ENCODE measurements at regions of chr1 and their contacts with region 1.

Region 1: DNA sequence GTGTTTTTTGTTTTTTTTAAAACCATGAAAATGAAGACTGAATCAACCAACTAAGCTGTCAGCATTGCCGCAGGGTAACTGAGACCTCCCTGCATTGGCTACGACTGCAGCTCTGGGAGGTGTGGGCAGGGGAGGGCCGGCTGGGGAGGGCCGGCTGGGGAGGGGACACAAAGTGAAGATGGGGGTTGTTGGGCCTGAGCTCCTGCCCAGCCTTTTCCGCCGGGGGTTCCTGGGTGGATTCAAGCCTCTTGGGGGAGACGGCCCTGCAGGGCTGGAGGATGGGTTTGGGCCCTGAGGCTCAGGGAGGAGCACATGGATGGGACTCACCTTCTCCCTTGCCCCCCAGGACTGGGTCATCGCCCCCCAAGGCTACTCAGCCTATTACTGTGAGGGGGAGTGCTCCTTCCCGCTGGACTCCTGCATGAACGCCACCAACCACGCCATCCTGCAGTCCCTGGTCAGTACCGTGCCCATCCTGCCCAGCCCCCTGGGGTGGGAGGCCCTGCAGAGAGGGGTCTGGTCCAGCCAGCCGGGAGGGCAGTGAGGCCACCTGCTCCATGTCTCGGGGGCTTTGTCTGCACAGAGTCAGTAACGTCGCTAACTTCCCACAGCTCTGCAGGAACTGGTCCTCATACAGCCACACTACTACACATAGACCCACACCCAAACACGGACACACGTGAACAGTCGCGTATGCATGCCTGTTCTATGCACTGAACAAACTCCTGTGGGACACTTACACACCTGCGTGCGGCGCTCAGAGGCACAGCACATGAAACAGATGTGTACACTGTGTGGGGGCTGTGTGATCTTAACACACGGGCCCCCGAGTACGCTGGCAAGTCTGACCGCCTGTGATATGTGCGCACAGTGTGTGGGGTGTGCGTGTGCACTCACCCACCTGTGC is 31.5 kb downstream of the BMP8A start:
- DNase-seq: no peak
- H3K4me3 ChIP-seq: no peak overlapping the region
- H3K27ac ChIP-seq: no peak overlapping the region
- H3K4me1 ChIP-seq: no peaks in the 10 kb centered on the region
- H3K27me3 ChIP-seq: no peaks in the 10 kb centered on the region
- CTCF ChIP-seq: no peak

Region 2: DNA sequence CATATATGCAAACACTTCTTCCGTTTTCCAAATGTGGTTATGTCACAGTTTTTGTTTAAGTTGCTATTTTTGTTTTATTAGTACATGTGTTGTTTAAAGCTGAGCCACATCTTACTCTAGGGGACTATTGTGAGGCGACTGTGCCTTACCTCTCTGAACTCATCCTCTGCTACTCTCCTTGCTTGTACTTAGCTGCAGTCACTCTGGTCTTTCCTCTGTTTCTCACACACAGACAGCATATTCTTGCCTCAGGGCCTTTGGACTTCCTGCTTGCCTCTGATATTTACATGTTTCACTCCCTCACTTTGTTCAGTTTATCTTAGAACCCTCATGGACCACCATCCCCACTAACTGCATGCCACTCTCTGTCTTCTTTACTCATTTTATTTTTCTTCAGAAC is 217.4 kb before region 1 on chr1:
- CTCF ChIA-PET with region 1: no interaction called
- POLR2A ChIA-PET with region 1: no interaction called
- intact Hi-C with region 1: no loop called
- DNase-seq: no peak
- H3K4me3 ChIP-seq: no peak overlapping the region
- H3K27ac ChIP-seq: no peak overlapping the region
- H3K4me1 ChIP-seq: no peaks in the 10 kb centered on the region
- H3K27me3 ChIP-seq: no peaks in the 10 kb centered on the region
- CTCF ChIP-seq: no peak

Region 3: DNA sequence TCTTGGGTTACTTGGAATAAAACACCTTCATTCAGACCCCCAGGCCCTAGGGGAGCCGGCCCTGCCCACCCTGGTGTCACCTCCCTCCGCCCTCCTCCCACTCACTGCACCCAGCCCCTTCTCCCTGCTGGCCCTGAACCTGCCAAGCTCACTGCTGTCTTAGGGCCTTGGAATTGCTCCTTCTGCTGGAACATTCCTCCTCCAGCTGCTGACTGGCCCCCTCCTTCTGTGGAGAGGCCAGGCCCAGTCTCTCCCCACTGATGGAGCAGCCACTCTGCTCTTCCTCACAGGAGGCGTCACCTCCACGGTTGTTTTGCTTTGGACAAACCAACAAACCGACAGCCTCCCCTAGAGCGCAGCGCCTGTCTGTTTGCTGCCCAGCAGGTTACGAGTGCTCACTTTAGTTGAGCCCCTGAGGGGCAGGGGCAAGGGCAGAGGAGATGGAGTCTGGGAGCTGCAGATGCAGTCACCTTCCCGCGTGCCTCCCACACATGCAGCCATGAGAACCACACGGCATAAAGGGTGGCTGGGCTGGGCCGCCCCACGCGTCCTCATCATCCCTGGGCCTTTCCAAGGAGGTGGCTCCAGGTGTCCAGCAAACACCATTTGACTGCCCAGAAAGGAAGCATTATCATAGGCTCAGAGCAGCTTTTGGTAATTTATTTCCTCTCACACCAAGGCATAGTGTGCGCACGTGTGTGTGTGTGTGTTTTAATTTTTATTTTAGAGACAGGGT is 238.8 kb after region 1 on chr1:
- CTCF ChIA-PET with region 1: no interaction called
- POLR2A ChIA-PET with region 1: no interaction called
- intact Hi-C with region 1: loop called (anchors 5 kb)
- DNase-seq: no peak
- H3K4me3 ChIP-seq: no peak overlapping the region
- H3K27ac ChIP-seq: no peak overlapping the region
- H3K4me1 ChIP-seq: no peaks in the 10 kb centered on the region
- H3K27me3 ChIP-seq: no peaks in the 10 kb centered on the region
- CTCF ChIP-seq: no peak

Region 4: DNA sequence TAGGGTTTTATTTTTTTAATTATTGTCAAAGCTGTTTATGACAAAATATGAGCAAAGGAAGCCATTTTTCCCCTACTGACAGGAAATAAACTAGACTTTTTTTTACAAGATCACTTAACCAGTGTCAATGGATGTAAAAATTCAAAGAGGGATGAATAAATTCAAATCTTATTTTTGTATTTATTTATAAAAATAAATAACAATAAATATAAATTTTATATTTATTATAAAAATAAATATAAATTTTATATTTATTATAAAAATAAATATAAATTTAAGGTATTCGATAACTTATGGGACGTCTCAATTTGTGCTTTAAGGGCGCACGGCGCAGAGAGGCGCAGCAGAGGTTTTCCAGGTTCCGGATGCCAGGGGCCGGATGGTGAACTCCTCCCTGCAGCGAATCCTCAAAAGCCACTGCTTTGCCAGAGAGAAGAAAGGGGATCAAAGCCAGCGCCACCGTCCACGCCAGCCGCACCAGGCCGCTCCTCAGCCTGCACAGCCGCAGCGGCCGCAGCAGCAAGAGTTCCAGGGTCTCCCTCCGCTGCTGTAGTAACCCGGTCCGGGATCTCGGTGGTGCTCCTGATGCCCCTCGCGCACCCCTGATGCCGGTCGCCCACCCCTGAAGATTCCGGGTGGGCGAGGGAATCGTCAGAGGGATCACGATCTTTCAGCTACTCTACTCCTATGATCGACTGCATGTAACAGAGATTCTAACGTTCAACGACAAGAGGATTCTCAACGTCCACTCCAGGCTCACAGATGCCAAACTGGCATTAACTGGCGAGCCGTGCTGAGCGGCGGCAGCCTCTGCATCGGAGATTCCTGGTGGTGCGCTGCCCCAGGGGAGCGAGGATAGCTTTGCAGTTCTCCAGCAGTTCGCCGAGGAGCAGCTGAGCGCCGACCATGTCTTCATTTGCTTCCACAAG is 609.7 kb after region 1 on chr1:
- CTCF ChIA-PET with region 1: no interaction called
- POLR2A ChIA-PET with region 1: no interaction called
- intact Hi-C with region 1: no loop called
- DNase-seq: peak; percentile 52
- H3K4me3 ChIP-seq: peak overlapping the region; percentile 39
- H3K27ac ChIP-seq: no peak overlapping the region
- H3K4me1 ChIP-seq: no peaks in the 10 kb centered on the region
- H3K27me3 ChIP-seq: no peaks in the 10 kb centered on the region
- CTCF ChIP-seq: no peak

Measured in A673 (cell line).